Psoas muscle (tissue), 8 donors: ENCODE measurements at regions of chr7 and their contacts with region 1.

Region 1: DNA sequence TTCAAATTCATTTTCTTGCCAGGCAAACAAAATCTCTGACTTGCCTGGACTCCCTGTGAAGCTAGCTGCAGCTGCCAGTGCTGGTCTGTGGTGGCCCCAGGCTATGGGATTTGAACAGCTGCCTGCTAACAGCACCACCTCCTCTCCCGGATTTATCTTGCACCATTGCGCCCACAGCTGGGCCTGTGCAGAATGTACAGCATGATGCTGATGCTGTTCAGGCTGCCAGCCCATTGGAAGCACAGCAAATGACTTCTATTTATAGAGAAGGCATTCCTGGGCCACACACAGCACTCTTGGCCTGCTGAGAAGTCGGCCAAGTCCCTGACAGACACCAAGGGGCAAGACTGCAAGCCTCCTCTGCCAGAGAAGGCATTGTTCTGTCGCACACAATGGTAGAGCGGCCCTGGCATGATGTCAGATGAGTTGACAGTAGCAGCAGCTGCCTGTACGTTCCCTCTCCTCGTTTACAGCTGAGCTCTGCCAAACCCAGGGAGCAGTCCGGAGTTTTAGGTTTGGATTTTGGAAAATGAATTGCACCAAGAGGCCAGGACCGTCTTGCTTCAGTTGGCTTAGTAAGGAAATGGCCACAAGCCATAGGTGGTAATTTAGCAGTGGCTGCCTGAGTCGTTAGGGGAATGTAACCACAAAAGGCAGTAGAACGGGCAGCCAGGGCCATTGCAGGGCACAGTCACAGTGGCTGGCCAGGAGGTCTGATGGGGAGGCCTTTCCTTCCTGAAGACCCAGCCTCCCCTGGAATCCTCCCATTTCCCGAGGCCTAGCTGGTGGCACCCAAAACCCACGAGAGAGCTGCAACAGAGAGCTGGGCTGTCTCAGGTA is 38.5 kb downstream of the MTURN start:
- DNase-seq: peak; percentile 84 to 93
- ATAC-seq: peak; percentile 86 to 89 (median 87)
- H3K4me3 ChIP-seq: peak overlapping the region; percentile 31
- H3K27ac ChIP-seq: peak overlapping the region; percentile 87
- H3K4me1 ChIP-seq: peaks cover 85% of the 10 kb centered on the region
- H3K27me3 ChIP-seq: no peaks in the 10 kb centered on the region
- CTCF ChIP-seq: no peak

Region 2: GRCh38 chr7:30225863-30226613 is 52.8 kb after region 1 on chr7:
- intact Hi-C with region 1: loop called in 1 of 2 experiments (anchors 2 kb)
- DNase-seq: peak; percentile 67 to 87
- ATAC-seq: peak; percentile 96 to 98 (median 96)
- H3K4me3 ChIP-seq: peak overlapping the region; percentile 17
- H3K27ac ChIP-seq: peak overlapping the region; percentile 95
- H3K4me1 ChIP-seq: peaks cover 24% of the 10 kb centered on the region
- H3K27me3 ChIP-seq: no peaks in the 10 kb centered on the region
- CTCF ChIP-seq: no peak

Region 3: GRCh38 chr7:30276203-30276900 is 103.1 kb after region 1 on chr7:
- intact Hi-C with region 1: loop called in 1 of 2 experiments (anchors 5 kb)
- DNase-seq: no peak
- ATAC-seq: peak; percentile 39 to 76 (median 52)
- H3K4me3 ChIP-seq: no peak overlapping the region
- H3K27ac ChIP-seq: no peak overlapping the region
- H3K4me1 ChIP-seq: peaks cover 22% of the 10 kb centered on the region
- H3K27me3 ChIP-seq: no peaks in the 10 kb centered on the region
- CTCF ChIP-seq: peak; percentile 72

Region 4: DNA sequence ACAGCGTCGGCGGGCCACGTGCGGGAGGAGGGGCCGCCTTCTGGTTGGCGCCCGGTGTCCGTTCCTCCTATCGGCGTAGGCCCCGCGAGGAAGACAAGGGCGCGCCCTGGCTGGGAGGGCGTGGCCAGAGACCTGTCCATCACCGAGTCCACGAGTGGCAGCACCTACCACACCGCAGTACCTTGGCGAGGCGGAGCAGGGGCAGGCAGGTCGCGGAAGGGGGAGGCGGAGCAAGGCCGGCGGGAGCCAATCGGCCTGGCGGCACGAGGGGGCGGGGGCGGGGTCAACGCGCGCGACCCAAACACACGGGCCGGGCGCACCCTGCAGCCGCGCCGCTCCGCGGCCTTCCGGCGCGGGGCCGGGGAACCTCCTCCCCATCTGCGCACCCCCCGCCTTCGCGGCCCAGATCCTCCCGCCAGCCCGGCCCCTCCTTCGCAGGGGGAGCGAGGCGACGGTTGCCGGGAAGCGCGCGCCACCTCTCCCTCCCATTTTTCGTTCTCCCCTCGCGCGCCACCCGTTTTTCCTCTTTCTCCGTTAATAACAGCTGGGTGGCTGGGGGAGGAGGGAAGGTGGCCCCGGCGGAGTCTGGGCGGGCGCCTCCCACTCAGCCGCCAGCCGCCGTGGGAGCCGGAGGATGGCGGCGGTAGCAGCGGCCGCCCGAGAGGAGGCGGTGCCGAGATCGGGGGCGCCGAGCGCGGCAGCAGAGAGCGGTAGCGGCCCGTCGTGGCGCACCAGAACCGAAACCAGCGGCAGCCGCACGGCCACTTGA is 111.2 kb after region 1 on chr7 and contains the start of gene ZNRF2:
- intact Hi-C with region 1: loop called (anchors 2 to 5 kb)
- DNase-seq: peak; percentile 99 to 100
- ATAC-seq: peak; percentile 92 to 96 (median 92)
- H3K4me3 ChIP-seq: peak within 1 kb of the TSS; percentile 72
- H3K27ac ChIP-seq: peak within 1 kb of the TSS; percentile 95
- H3K4me1 ChIP-seq: peaks cover 21% of the 10 kb centered on the region
- H3K27me3 ChIP-seq: no peaks in the 10 kb centered on the region
- CTCF ChIP-seq: peak; percentile 46
- total RNA-seq, gene ZNRF2: 10.2 to 21.5 (median 12.7) TPM